A549 (cell line): ENCODE measurements at regions of chr13 and their contacts with region 1.

Region 1: DNA sequence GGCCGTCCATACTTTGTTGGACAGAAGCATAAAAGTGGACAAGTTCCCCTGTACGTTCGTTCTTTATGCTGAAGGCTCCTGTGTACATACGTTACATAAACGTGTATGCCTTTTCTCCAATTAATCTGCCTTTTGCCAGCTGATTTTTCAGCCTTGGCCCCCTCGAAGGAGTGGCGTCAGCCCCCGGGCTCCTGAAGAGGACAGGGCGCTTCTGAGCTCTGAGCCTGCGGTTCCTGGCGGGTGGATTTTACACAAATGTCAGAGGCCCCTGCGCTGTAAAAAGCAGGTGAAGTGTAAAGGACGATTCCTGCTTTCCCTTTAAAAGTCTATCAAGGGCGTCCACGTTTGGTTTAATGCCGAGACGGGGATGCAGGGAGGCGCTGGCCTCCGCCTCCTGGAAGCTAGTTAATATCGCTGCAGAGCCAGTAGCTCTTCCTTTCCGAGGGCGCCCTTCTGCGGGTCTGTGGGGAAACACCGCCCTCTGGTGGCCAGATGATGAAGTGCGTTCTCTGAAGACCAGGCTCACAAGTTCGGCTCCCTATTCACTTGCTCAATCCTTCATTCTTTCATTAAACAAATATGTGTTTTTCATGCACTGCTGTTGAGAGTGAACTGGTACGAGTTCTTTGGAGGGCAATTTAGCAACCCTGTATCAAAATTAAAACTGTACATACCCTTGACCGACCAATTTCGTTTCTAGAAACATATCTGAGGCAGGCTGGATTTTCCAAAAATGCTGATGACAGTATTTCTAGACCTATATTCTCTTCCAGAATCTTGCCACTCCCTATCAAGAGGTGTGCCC is 62.0 kb downstream of the GPR12 start:
- DNase-seq: peak; percentile 43 to 72
- ATAC-seq: peak; percentile 76 to 93
- H3K4me3 ChIP-seq: no peak overlapping the region
- H3K27ac ChIP-seq: no peak overlapping the region
- H3K4me1 ChIP-seq: no peaks in the 10 kb centered on the region
- CTCF ChIP-seq: peak; percentile 69
- EP300 ChIP-seq: no peak
- POLR2A ChIP-seq: no peak
- RAD21 ChIP-seq: peak; percentile 81 to 86

Region 2: DNA sequence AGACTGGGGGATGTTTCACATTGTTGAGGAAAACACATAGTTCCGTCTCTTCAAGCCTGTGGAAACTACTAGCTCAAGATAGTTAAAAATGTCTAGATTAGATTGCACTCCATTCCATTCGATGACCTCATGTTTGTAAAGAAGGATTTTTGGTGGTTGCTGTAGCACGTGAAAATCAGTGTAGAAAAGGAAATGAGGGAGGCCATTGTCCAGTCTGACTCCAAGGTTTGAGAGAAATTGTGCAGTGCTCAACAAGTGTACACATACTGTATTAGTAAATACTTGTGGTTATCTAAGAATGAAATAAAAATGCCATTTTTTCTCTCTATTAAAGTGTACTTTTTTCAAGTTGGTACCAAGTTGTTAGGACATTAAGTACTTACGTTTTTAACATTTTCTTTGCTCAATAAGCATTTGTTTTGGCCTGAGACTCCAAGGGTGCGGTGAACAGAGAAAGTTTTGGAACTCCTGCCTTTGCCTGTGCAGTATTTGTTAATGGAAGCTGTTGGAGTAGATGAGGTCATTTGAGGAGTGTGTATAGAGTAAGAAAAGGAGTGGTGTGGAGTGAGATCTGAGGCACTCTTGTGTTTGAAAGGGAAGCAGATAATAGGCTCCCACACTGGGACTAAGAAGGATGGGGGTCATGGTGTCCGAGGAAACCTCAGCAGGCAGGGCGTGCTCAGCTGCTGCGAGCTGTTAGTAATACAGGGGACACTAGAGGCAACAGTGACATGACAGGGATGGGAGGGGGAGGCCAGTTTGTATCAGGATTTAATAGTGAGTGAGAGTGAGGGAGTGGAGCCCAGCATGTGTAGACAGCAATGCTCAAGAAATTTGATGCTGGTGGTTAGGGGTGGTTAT is 136.7 kb before region 1 on chr13:
- CTCF ChIA-PET with region 1: no interaction called
- POLR2A ChIA-PET with region 1: no interaction called
- DNase-seq: no peak
- ATAC-seq: no peak
- H3K4me3 ChIP-seq: no peak overlapping the region
- H3K27ac ChIP-seq: no peak overlapping the region
- H3K4me1 ChIP-seq: peaks cover 3% of the 10 kb centered on the region; the same call in 1 of the 3 replicates
- CTCF ChIP-seq: no peak
- EP300 ChIP-seq: no peak
- POLR2A ChIP-seq: no peak
- RAD21 ChIP-seq: no peak

Region 3: GRCh38 chr13:26656919-26657318 is 41.7 kb before region 1 on chr13:
- CTCF ChIA-PET with region 1: no interaction called
- POLR2A ChIA-PET with region 1: no interaction called
- DNase-seq: no peak
- ATAC-seq: no peak
- H3K4me3 ChIP-seq: no peak overlapping the region
- H3K27ac ChIP-seq: no peak overlapping the region
- H3K4me1 ChIP-seq: no peaks in the 10 kb centered on the region
- CTCF ChIP-seq: no peak
- EP300 ChIP-seq: no peak
- POLR2A ChIP-seq: no peak
- RAD21 ChIP-seq: no peak

Region 4: DNA sequence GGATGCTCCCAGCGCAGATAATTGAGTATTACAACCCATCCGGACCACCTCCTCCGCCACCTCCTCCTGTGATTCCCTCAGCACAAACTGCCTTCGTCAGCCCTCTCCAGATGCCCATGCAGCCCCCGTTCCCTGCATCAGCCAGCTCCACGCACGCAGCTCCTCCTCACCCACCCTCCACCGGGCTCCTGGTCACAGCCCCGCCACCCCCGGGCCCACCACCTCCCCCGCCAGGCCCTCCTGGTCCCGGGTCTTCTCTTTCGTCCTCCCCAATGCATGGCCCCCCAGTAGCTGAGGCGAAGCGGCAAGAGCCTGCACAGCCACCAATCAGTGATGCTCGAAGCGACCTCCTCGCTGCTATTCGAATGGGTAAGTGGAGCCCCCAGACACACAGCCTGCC is 16.0 kb before region 1 on chr13:
- CTCF ChIA-PET with region 1: interaction called, 21 read pairs
- POLR2A ChIA-PET with region 1: no interaction called
- DNase-seq: no peak
- ATAC-seq: no peak
- H3K4me3 ChIP-seq: no peak overlapping the region
- H3K27ac ChIP-seq: no peak overlapping the region
- H3K4me1 ChIP-seq: no peaks in the 10 kb centered on the region
- CTCF ChIP-seq: no peak
- EP300 ChIP-seq: no peak
- POLR2A ChIP-seq: no peak
- RAD21 ChIP-seq: no peak

Region 5: DNA sequence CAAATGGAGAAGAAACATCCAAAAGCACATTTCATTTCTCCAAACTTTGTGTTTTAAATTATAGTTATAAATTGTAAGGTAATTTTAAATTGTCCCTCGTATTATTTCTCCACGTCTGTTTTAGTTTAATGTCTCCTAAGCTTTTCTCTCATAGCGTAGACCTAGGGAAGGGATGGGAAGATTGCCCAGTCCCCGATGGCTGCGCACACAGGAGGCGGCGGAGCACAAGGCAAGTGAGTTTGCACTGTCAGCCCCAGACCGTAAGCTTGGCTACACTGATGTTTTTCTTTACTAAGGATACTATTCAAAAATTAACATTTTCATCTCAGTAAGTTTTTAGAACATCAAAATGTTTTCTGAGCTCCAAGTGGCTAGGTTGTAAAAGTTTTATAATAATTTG is 10.3 kb before region 1 on chr13:
- CTCF ChIA-PET with region 1: interaction called, 21 read pairs
- POLR2A ChIA-PET with region 1: no interaction called
- DNase-seq: no peak
- ATAC-seq: no peak
- H3K4me3 ChIP-seq: no peak overlapping the region
- H3K27ac ChIP-seq: no peak overlapping the region
- H3K4me1 ChIP-seq: no peaks in the 10 kb centered on the region
- CTCF ChIP-seq: no peak
- EP300 ChIP-seq: no peak
- POLR2A ChIP-seq: no peak
- RAD21 ChIP-seq: no peak

Region 6: DNA sequence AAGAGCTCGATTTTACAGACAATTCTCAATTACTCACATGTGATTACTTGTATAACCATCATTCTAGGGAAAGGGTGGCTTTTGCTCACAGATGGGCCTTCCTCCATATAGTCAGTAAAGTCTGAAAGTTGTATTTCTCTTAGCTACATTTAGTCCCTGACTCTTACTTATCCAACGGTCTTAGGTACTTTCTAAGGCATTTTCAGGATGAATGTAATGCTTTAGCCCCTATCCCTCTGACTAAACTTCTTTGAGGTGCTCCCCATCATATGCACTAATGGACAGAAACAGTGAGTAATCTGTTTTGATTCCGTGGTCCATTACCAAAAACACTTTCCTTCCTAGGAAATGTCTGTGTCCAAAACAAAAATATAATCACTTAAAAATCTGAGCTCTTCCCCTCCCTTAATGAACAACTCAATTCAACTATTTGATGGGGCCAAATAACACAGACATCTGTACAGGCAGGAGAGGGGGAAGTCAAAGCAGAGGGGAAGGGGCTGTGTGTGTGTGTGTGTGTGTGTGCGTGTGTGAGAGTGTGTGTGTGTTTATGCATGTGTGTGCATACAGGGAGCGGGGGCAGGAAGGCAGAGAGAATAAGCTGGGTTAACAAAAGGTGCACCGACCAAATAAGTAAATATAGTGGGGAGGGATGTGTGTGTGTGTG is 388.1 kb after region 1 on chr13:
- CTCF ChIA-PET with region 1: no interaction called
- POLR2A ChIA-PET with region 1: no interaction called
- DNase-seq: no peak
- ATAC-seq: no peak
- H3K4me3 ChIP-seq: no peak overlapping the region
- H3K27ac ChIP-seq: no peak overlapping the region
- H3K4me1 ChIP-seq: no peaks in the 10 kb centered on the region
- CTCF ChIP-seq: no peak
- EP300 ChIP-seq: no peak
- POLR2A ChIP-seq: no peak
- RAD21 ChIP-seq: no peak